WTC11 (cell line): ENCODE measurements at regions of chr12 and their contacts with region 1.

Region 1: DNA sequence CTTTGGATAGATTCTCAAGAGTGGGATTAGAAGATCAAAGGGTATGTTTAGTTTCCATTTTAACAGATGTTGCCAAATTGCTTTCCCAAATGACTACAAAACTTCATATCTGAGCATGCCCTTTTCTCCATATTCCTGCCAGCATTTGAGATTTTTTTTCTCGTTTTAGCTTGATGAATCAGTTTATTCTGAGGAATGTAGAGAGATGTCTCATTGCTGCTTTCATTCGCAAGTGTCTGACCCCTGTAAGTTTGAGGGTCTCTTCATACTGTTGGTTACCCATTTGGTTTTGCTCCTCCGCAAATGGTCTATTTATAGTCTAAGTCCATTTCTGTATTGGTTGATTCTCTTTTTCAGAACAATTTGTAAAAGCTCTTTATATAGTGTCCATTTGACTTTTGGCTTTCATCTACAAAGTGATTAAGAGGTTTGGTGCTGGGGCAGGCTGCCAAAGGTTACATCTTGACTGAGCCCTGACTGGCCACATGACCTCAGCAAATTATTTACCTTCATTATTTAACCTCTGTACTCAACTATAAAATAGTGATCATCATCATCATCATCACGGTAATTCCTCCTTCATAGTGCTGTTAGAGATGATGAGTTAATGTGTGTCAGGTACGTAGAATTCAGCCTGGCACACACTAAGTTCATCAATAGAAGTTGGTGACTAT is 33.6 kb downstream of the HCAR2 start:
- DNase-seq: no peak
- ATAC-seq: no peak
- H3K4me3 Mint-ChIP-seq: no peak overlapping the region
- H3K27ac Mint-ChIP-seq: no peak overlapping the region
- H3K4me1 Mint-ChIP-seq: peaks cover 8% of the 10 kb centered on the region
- H3K27me3 Mint-ChIP-seq: no peaks in the 10 kb centered on the region
- CTCF ChIP-seq: no peak

Region 2: DNA sequence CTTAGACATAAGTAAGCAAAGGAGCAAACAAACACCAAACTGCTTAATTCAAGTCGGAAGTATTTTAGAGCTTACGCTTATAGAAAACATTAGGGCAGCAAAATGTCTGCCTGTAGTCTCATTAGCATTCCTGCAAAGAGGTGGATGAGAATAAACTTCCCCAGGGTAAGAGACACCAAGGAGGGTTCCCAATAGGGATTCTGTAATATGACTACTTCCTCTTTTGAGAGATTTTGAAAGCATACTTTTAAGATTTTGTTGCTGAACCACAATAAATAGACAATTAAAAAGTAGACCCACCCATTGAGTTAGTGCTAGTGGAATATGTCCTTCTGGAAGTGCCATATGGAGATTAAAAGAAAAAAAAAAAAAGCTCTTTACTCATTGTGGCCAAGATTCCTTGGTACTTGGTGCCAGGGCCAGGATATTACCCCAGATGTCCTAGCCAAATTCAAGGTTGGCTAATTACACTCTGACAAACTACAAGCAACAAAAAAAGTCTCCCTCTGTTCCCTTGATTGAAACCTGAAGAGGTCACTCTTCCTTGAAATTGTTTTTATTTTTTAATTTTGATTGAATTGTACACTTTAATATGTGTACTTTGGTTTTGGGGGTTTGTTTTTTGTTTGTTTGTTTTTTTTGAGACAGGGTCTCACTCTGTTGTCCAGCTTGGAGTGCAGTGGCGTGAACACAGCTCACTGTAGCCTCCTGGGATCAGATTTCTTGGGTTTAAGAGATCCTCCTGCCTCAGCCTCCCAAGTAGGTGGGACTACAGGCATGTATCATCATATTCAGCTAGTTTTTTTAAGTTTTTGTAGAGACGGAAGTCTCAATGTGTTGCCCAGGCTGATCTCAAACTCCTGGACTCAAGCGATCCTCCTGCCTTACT is 255.8 kb before region 1 on chr12:
- CTCF ChIA-PET with region 1: no interaction called
- POLR2A ChIA-PET with region 1: interaction called, 11 read pairs
- DNase-seq: no peak
- ATAC-seq: no peak
- H3K4me3 Mint-ChIP-seq: no peak overlapping the region
- H3K27ac Mint-ChIP-seq: no peak overlapping the region; the same call in 1 of the 2 replicates
- H3K4me1 Mint-ChIP-seq: peaks cover 10% of the 10 kb centered on the region
- H3K27me3 Mint-ChIP-seq: no peaks in the 10 kb centered on the region
- CTCF ChIP-seq: no peak

Region 3: GRCh38 chr12:122659519-122659918 is 10.0 kb before region 1 on chr12:
- CTCF ChIA-PET with region 1: interaction called, 12 read pairs
- POLR2A ChIA-PET with region 1: no interaction called
- DNase-seq: no peak
- ATAC-seq: no peak
- H3K4me3 Mint-ChIP-seq: no peak overlapping the region
- H3K27ac Mint-ChIP-seq: no peak overlapping the region
- H3K4me1 Mint-ChIP-seq: no peaks in the 10 kb centered on the region
- H3K27me3 Mint-ChIP-seq: no peaks in the 10 kb centered on the region
- CTCF ChIP-seq: no peak